ENCODE measurements at regions of chr4 and their contacts with region 1.

Region 1: GRCh38 chr4:168831919-168832762 is 177.9 kb downstream of the CBR4 start:
- DNase-seq: peak; percentile 31 to 93
- H3K4me3 ChIP-seq: peak overlapping the region; percentile 90 to 95
- H3K27ac ChIP-seq: peak overlapping the region; percentile 97 to 99
- H3K4me1 ChIP-seq: peaks cover 11 to 18% of the 10 kb centered on the region in 2 donors
- H3K27me3 ChIP-seq: no peaks in the 10 kb centered on the region
- CTCF ChIP-seq: peak in 1 of 3 experiments; percentile 15

Region 2: DNA sequence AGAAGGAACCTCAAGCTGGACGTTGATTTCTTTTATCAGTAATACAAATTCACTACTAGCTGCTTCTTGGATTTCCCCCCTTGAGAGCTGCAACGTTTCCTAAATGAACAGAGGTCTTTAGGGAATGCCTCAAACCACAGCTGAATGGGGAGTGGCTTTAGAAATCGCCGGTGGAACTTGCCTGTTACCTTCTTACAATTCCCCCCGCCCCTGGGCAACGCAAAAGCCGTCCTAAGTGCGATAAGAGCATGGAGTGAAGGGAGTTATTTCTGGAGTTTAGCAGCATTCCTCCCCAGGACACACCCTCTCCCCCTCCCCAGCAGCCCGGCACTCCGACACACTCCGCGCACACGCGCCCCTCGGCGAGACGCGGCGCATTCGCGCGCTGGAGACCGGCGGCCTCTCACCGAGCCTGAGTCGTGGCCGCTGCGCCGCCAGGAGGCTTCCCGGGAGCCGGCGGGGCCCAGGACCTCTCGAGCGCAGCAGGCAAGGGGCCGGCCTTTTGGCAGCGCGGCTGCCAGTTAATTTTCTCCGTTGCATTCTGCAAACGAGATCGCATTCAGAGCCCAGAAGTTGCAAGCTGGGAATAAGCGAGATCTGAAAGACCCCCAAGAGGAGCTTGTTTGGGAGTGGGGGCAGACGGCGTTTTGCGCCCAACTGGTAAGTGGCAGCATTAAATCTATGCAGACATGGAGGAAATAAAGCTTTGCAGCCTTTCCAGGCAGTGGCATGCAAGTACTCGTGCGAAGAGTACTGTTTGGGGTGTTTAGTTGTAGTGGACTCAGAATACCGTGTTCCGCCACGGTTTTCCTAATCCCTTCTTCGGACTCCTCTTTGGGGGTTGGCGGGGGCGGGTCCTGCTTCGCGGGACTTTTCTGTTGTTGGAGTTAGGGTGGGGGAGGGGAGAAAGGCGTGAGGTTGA is 200.6 kb before region 1 on chr4:
- intact Hi-C with region 1: loop called (anchors 5 kb)
- DNase-seq: peak in 1 of 2 donors; percentile 73
- H3K4me3 ChIP-seq: peak overlapping the region; percentile 69 to 72
- H3K27ac ChIP-seq: peak overlapping the region; percentile 70 to 81
- H3K4me1 ChIP-seq: peaks cover 4 to 25% of the 10 kb centered on the region in 2 donors
- H3K27me3 ChIP-seq: no peaks in the 10 kb centered on the region
- CTCF ChIP-seq: peak; percentile 40 to 50 (median 47)

Region 3: GRCh38 chr4:168710353-168710946 is 121.7 kb before region 1 on chr4:
- intact Hi-C with region 1: loop called (anchors 2 kb)
- DNase-seq: peak in 1 of 2 donors; percentile 81
- H3K4me3 ChIP-seq: no peak overlapping the region
- H3K27ac ChIP-seq: peak overlapping the region; percentile 81 to 87
- H3K4me1 ChIP-seq: peaks cover 8 to 21% of the 10 kb centered on the region in 2 donors
- H3K27me3 ChIP-seq: no peaks in the 10 kb centered on the region
- CTCF ChIP-seq: peak; percentile 13 to 76 (median 70)

Region 4: GRCh38 chr4:168765726-168766125 is 66.4 kb before region 1 on chr4:
- intact Hi-C with region 1: loop called (anchors 2 kb)
- DNase-seq: peak in 1 of 2 donors; percentile 82
- H3K4me3 ChIP-seq: no peak overlapping the region
- H3K27ac ChIP-seq: peak overlapping the region; percentile 82 to 90
- H3K4me1 ChIP-seq: peaks cover 0 to 46% of the 10 kb centered on the region in 2 donors
- H3K27me3 ChIP-seq: no peaks in the 10 kb centered on the region
- CTCF ChIP-seq: no peak

Region 5: DNA sequence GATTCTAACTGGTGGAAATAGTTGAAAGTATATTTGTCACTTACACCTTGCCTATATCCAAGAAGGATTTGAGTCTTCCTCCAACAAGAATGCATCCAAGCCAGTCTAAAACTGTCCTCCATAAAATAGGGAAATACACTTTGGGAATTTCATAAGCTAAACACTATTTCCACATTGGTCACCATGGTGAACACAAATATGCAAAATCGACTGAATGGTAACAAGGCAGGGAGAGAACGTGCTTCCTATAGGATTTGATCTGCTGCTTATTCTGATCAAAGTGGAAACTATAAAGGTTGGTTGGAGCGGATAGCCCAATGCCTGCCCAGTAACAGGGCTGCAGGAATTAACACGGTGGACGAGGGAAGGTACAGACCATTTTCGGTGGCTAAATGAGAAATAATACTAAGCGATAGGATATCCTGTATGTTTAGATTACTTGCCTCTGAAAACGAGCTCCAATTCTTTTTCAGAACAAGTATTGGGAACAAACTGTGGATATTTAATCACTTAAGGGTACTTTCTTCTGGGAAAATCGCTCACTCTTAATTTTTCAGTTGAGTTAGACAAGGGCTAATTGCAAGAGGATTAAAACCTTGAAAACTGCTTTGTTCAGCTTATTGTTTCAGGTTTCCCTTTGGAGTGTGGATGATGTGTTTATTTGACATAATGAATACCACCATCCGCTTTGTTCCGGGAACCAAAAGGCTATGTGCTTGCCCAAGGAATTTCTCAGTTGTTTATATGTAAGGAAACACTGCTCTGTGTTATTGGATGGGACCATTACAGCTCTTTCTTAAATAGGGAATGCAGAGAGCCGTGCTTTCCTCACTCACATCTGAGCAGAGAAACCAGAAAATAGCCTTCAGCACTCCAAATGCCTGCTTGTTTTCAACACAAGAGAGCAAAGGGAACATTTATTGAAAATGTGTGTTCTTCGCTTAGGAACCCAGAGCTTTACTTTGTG is 16.5 kb before region 1 on chr4:
- intact Hi-C with region 1: loop called (anchors 1 kb)
- DNase-seq: no peak
- H3K4me3 ChIP-seq: peak overlapping the region in 1 of 2 donors; percentile 43
- H3K27ac ChIP-seq: peak overlapping the region; percentile 78 to 84
- H3K4me1 ChIP-seq: peaks cover 5 to 33% of the 10 kb centered on the region in 2 donors
- H3K27me3 ChIP-seq: no peaks in the 10 kb centered on the region
- CTCF ChIP-seq: no peak

Region 6: GRCh38 chr4:168877511-168878491 is 45.7 kb after region 1 on chr4:
- intact Hi-C with region 1: loop called (anchors 2 kb)
- DNase-seq: no peak
- H3K4me3 ChIP-seq: peak overlapping the region; percentile 58 to 63
- H3K27ac ChIP-seq: peak overlapping the region; percentile 85 to 88
- H3K4me1 ChIP-seq: peaks cover 0 to 68% of the 10 kb centered on the region in 2 donors
- H3K27me3 ChIP-seq: no peaks in the 10 kb centered on the region
- CTCF ChIP-seq: no peak